CD4-positive, alpha-beta T cell (primary cell): ENCODE measurements at regions of chr7 and their contacts with region 1.

Region 1: GRCh38 chr7:151432791-151433521 is 7.0 kb downstream of the CRYGN start:
- DNase-seq: peak in 12 of 14 experiments; percentile 29 to 82 (median 51)
- ATAC-seq: peak; percentile 51
- H3K4me3 ChIP-seq: peak overlapping the region; percentile 14
- H3K4me3 Mint-ChIP-seq: peak overlapping the region; percentile 35
- H3K27ac ChIP-seq: peak overlapping the region; percentile 24 to 67
- H3K27ac Mint-ChIP-seq: peak overlapping the region; percentile 88
- H3K4me1 ChIP-seq: peaks cover 66% of the 10 kb centered on the region
- H3K4me1 Mint-ChIP-seq: peaks cover 60% of the 10 kb centered on the region
- H3K27me3 ChIP-seq: no peaks in the 10 kb centered on the region
- H3K27me3 Mint-ChIP-seq: no peaks in the 10 kb centered on the region
- CTCF ChIP-seq: peak; percentile 58

Region 2: GRCh38 chr7:151374139-151374538 is 58.8 kb before region 1 on chr7:
- CTCF ChIA-PET with region 1: no interaction called
- POLR2A ChIA-PET with region 1: interaction called, 3 read pairs
- intact Hi-C with region 1: loop called in 1 of 2 experiments (anchors 2 kb)
- DNase-seq: no peak
- ATAC-seq: no peak
- H3K4me3 ChIP-seq: no peak overlapping the region
- H3K4me3 Mint-ChIP-seq: no peak overlapping the region
- H3K27ac ChIP-seq: no peak overlapping the region
- H3K27ac Mint-ChIP-seq: no peak overlapping the region
- H3K4me1 ChIP-seq: no peaks in the 10 kb centered on the region
- H3K4me1 Mint-ChIP-seq: no peaks in the 10 kb centered on the region
- H3K27me3 ChIP-seq: no peaks in the 10 kb centered on the region
- H3K27me3 Mint-ChIP-seq: no peaks in the 10 kb centered on the region
- CTCF ChIP-seq: no peak

Region 3: GRCh38 chr7:151381348-151382078 is 51.4 kb before region 1 on chr7:
- CTCF ChIA-PET with region 1: no interaction called
- POLR2A ChIA-PET with region 1: interaction called, 10 read pairs
- intact Hi-C with region 1: no loop called
- DNase-seq: peak; percentile 24 to 90 (median 57)
- ATAC-seq: peak; percentile 82
- H3K4me3 ChIP-seq: peak overlapping the region; percentile 58
- H3K4me3 Mint-ChIP-seq: no peak overlapping the region
- H3K27ac ChIP-seq: peak overlapping the region; percentile 29 to 44
- H3K27ac Mint-ChIP-seq: peak overlapping the region; percentile 84
- H3K4me1 ChIP-seq: peaks cover 21% of the 10 kb centered on the region
- H3K4me1 Mint-ChIP-seq: peaks cover 13% of the 10 kb centered on the region
- H3K27me3 ChIP-seq: peaks cover 4 to 7% of the 10 kb centered on the region in 2 experiments
- H3K27me3 Mint-ChIP-seq: peaks cover 18% of the 10 kb centered on the region
- CTCF ChIP-seq: no peak

Region 4: GRCh38 chr7:151403764-151404163 is 29.2 kb before region 1 on chr7:
- CTCF ChIA-PET with region 1: no interaction called
- POLR2A ChIA-PET with region 1: no interaction called
- intact Hi-C with region 1: loop called in 1 of 2 experiments (anchors 2 kb)
- DNase-seq: no peak
- ATAC-seq: no peak
- H3K4me3 ChIP-seq: no peak overlapping the region
- H3K4me3 Mint-ChIP-seq: no peak overlapping the region
- H3K27ac ChIP-seq: no peak overlapping the region
- H3K27ac Mint-ChIP-seq: no peak overlapping the region
- H3K4me1 ChIP-seq: peaks cover 50% of the 10 kb centered on the region
- H3K4me1 Mint-ChIP-seq: peaks cover 4% of the 10 kb centered on the region
- H3K27me3 ChIP-seq: peaks cover 0 to 3% of the 10 kb centered on the region in 2 experiments
- H3K27me3 Mint-ChIP-seq: peaks cover 6% of the 10 kb centered on the region
- CTCF ChIP-seq: no peak

Region 5: GRCh38 chr7:151408839-151409666 is 23.9 kb before region 1 on chr7:
- CTCF ChIA-PET with region 1: no interaction called
- POLR2A ChIA-PET with region 1: interaction called, 4 read pairs
- intact Hi-C with region 1: loop called in 1 of 2 experiments (anchors 1 kb)
- DNase-seq: peak in 13 of 14 experiments; percentile 27 to 96 (median 67)
- ATAC-seq: peak; percentile 84
- H3K4me3 ChIP-seq: peak overlapping the region; percentile 65
- H3K4me3 Mint-ChIP-seq: peak overlapping the region; percentile 80
- H3K27ac ChIP-seq: peak overlapping the region; percentile 53 to 93
- H3K27ac Mint-ChIP-seq: peak overlapping the region; percentile 79
- H3K4me1 ChIP-seq: peaks cover 59% of the 10 kb centered on the region
- H3K4me1 Mint-ChIP-seq: peaks cover 23% of the 10 kb centered on the region
- H3K27me3 ChIP-seq: peaks cover 22 to 23% of the 10 kb centered on the region in 2 experiments
- H3K27me3 Mint-ChIP-seq: peaks cover 33% of the 10 kb centered on the region
- CTCF ChIP-seq: no peak